GM10248 (cell line): ENCODE measurements at regions of chr6 and their contacts with region 1.

Region 1: GRCh38 chr6:35139908-35140655 is 1.1 kb downstream of the TCP11 start:
- DNase-seq: peak; percentile 49
- CTCF ChIP-seq: peak; percentile 79

Region 2: DNA sequence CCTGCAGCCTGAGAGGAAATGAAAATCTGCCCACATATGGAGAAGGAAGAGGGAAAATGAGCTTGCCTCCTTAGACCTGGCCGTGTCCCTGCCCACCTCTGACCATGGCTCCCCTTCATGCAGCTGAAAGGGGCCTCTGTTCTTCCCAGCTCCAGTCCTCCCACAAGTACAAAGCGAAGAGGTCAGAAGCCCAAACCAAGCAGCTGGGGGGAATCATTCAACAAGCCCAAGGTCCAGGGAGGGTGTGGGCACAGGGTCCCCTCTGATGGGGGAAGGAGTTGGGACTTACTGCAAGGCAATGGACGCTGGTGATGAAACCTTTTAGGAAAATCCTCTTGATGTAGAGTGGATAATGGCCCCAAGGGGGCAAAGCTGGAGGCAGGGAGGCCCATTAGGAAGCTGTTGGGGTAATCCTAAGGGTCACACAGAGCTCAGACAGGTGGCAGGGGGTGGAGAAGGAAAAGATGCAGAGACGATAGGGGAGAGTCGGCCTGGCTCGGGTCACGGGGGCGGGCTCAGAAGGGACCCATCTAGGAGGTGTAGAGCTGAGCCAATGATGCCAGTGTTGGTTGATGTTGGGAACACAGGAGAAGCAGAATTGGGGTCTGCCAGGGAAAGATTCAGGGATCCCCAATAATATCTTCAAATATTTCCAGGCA is 978.1 kb before region 1 on chr6:
- CTCF ChIA-PET with region 1: interaction called, 12 read pairs
- POLR2A ChIA-PET with region 1: no interaction called
- DNase-seq: no peak
- CTCF ChIP-seq: no peak

Region 3: GRCh38 chr6:34986845-34987246 is 153.2 kb before region 1 on chr6:
- CTCF ChIA-PET with region 1: interaction called, 95 read pairs
- POLR2A ChIA-PET with region 1: no interaction called
- DNase-seq: peak; percentile 68
- CTCF ChIP-seq: peak; percentile 62

Region 4: DNA sequence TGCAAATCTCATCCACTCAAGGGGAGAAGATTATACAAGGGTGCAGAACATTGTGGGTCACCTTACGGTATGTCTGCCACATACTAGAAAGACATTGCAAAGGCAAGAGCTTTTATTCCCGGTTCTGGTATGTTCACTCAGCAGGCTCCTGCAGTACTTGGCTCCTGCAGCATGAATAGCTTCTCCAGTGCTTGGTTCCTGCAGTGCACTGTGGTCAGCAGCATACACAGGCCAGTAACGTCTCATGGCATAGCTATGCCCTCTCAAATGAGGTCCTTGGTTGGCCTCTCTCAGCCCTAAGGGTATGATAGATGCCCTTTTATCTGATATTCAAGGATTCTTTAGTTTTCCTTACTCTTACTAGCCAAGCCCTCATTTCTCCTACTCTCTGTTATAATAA is 11.6 kb before region 1 on chr6:
- CTCF ChIA-PET with region 1: interaction called, 28 read pairs
- POLR2A ChIA-PET with region 1: no interaction called
- DNase-seq: no peak
- CTCF ChIP-seq: no peak

Region 5: DNA sequence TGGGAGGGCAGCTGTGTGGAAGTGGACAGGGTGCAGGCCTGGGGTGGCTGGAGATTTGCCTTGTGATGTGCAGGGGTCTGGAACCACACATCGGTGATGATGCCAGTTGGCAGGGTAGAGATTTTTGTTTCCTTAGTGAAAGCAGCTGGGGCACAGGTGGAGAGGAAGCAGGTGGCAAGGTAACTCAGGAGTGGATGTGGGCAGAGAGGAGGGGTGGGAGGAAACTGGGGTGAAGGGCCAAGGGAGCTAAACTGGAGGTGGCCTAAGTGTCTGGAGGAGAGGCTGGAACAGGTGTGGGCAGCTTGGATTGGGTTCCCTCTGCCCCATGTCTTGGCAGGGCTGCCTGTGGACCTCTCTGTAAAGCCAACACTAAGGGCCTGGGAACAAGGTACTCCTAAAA is 69.0 kb after region 1 on chr6:
- CTCF ChIA-PET with region 1: interaction called, 44 read pairs
- POLR2A ChIA-PET with region 1: no interaction called
- DNase-seq: no peak
- CTCF ChIP-seq: no peak